Mammary epithelial cell (primary cell): ENCODE measurements at regions of chr1 and their contacts with region 1.

Region 1: DNA sequence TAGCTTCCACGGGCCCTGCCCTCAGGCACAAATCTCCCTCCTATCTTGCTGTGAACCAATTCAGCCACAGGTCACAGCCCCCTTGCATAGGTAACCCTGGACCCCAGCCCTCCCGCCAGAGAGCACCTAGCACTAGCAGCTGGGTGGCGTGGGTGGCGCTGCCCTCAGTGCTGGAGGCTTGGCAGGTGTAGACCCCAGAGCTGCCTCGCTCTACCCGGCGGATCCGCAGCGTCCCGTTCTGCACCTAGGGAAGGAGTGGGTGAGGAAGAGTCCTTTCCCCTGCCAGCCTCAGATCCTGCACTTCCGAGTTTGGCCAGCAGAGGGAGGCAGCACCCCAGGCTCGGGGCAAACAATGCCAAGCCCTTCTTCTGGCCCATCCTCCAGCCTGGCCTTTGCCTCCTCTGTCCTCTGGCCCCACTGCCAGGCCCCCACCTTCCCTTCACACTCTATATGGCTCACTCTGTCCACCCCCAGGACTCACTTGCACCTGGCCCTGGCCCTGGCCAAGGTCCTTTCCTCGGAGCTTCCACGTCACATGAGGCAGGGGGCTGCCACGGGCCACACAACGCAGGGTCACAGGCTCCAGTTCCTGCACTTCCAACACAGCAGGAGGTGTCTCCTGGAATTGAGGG is 9.0 kb downstream of the IGSF9 start:
- DNase-seq: peak; percentile 51
- H3K4me3 ChIP-seq: no peak overlapping the region
- H3K27ac ChIP-seq: no peak overlapping the region
- H3K4me1 ChIP-seq: peaks cover 33% of the 10 kb centered on the region
- H3K27me3 ChIP-seq: no peaks in the 10 kb centered on the region
- CTCF ChIP-seq: peak; percentile 97 to 98

Region 2: GRCh38 chr1:159798893-159799292 is 137.5 kb before region 1 on chr1:
- CTCF ChIA-PET with region 1: no interaction called
- dilution Hi-C with region 1: no loop called
- in situ Hi-C with region 1: no loop called
- intact Hi-C with region 1: loop called (anchors 2 kb)
- DNase-seq: peak; percentile 76
- H3K4me3 ChIP-seq: no peak overlapping the region
- H3K27ac ChIP-seq: no peak overlapping the region
- H3K4me1 ChIP-seq: no peaks in the 10 kb centered on the region
- H3K27me3 ChIP-seq: peaks cover 2% of the 10 kb centered on the region
- CTCF ChIP-seq: peak; percentile 80 to 82